ENCODE measurements at regions of chr1 and their contacts with region 1.

Region 1: GRCh38 chr1:27102707-27103491 is 52.0 kb downstream of the SLC9A1 start:
- DNase-seq: peak; percentile 96
- H3K4me3 ChIP-seq: no peak overlapping the region
- H3K27ac ChIP-seq: no peak overlapping the region
- H3K4me1 ChIP-seq: peaks cover 26 to 33% (median 30%) of the 10 kb centered on the region in 4 donors
- H3K27me3 ChIP-seq: no peaks in the 10 kb centered on the region
- CTCF ChIP-seq: peak in 2 of 3 experiments; percentile 94 to 96
- EP300 ChIP-seq: no peak
- POLR2A ChIP-seq: no peak

Region 2: DNA sequence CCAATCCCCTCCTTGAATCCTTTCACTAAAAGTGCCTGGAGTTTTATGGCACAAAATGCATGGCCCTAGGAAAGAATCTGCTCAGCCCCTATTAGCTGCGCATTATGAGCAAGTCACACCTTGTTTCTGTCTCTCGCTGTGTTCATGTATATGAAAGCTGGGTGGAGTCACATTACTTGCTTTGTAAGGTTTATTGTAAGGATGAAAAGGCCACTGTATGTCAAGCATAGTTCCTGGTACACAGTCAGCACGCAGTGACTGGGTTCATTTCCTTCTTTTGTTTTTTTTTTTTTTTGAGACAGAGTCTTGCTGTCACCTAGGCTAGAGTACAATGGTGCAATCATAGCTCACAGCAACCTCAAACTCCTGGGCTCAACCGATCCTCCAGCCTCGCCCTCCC is 58.7 kb after region 1 on chr1:
- intact Hi-C with region 1: no loop called
- DNase-seq: no peak
- H3K4me3 ChIP-seq: no peak overlapping the region
- H3K27ac ChIP-seq: no peak overlapping the region
- H3K4me1 ChIP-seq: no peaks in the 10 kb centered on the region
- H3K27me3 ChIP-seq: no peaks in the 10 kb centered on the region
- CTCF ChIP-seq: no peak
- EP300 ChIP-seq: no peak
- POLR2A ChIP-seq: no peak

Region 3: DNA sequence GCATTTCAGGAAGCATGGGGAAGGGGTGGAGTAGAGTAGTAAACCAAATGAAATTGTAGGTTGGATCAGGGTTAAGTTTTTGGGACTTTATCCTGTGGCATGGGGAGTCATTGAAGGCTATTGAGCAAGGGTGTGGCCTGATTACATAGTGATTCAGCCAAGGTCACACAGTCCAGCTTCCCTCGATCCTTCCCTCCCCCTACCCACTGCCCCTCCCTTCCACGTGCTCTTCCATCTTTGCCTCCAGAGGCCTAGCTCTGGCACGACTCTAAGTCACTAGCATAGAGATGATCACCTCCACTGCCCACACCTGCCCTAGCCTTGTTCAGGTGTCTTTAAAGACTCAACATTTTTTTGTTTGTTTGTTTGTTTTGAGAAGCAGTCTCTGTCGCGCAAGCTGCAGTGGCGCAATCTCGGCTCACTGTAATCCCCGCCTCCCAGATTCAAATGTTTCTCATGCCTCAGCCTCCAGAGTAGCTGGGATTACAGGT is 89.2 kb after region 1 on chr1:
- intact Hi-C with region 1: loop called (anchors 5 kb)
- DNase-seq: no peak
- H3K4me3 ChIP-seq: no peak overlapping the region
- H3K27ac ChIP-seq: no peak overlapping the region
- H3K4me1 ChIP-seq: no peaks in the 10 kb centered on the region
- H3K27me3 ChIP-seq: no peaks in the 10 kb centered on the region
- CTCF ChIP-seq: no peak
- EP300 ChIP-seq: no peak
- POLR2A ChIP-seq: no peak